GM10248 (cell line): ENCODE measurements at regions of chr3 and their contacts with region 1.

Region 1: GRCh38 chr3:85516146-85516545 is 557.4 kb downstream of the CADM2 start:
- DNase-seq: no peak
- CTCF ChIP-seq: no peak

Region 2: GRCh38 chr3:85533586-85533985 is 17.4 kb after region 1 on chr3:
- CTCF ChIA-PET with region 1: interaction called, 12 read pairs
- POLR2A ChIA-PET with region 1: no interaction called
- DNase-seq: no peak
- CTCF ChIP-seq: no peak